Cardiac septum (tissue), 1 donor: ENCODE measurements at regions of chr17 and their contacts with region 1.

Region 1: GRCh38 chr17:78497115-78497540 is 80.1 kb downstream of the DNAH17 start:
- DNase-seq: peak; percentile 88

Region 2: DNA sequence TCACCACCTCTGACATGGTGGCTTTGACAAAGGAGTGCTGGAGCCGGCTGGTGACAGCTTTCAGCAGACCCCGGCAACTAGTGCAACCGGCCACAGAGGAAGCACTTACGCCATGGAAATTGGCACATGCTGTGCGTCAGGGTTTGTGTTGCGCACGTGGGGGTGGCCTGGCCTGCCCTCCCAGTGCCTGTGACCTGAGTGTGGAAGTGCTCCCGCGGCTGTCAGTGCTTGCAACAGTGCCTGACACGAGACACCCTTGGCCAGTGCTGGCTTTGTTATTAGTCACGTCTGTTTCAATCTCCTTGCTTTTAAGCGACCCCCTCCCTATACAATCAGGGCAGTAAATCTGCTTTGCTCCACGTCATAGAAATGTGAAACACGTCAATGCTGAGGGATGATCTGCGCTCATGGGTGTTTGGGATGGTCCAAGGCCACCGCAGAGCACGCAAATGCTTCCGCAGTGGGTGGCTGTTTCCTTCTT is 54.4 kb before region 1 on chr17:
- intact Hi-C with region 1: no loop called
- DNase-seq: peak; percentile 89

Region 3: GRCh38 chr17:78541488-78542237 is 44.5 kb after region 1 on chr17:
- intact Hi-C with region 1: no loop called
- DNase-seq: no peak

Region 4: DNA sequence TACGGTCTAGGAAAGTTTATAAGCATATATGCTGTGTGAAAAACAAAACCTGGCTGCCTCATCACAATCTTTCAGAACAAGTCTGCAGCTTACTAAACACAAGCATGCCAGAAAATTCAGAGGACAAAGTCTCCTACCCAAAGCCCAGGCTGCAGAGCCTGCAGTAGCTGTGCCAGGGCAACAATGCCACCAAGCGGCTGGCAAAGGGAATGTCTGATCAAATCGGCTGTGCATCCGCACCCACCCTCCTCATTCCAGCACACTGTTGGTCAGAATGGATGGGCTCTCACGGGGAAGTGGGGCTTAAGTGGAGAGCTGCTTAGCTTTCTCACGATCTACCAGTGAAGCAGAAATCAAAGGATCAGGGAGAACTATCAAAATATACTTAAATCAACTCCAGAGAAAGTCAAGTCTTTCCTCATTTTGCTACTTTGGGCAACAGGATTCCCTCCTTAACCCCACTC is 211.4 kb after region 1 on chr17:
- intact Hi-C with region 1: loop called (anchors 1 kb)
- DNase-seq: peak; percentile 84

Region 5: GRCh38 chr17:78745407-78746088 is 248.4 kb after region 1 on chr17:
- intact Hi-C with region 1: loop called (anchors 2 kb)
- DNase-seq: no peak

Region 6: DNA sequence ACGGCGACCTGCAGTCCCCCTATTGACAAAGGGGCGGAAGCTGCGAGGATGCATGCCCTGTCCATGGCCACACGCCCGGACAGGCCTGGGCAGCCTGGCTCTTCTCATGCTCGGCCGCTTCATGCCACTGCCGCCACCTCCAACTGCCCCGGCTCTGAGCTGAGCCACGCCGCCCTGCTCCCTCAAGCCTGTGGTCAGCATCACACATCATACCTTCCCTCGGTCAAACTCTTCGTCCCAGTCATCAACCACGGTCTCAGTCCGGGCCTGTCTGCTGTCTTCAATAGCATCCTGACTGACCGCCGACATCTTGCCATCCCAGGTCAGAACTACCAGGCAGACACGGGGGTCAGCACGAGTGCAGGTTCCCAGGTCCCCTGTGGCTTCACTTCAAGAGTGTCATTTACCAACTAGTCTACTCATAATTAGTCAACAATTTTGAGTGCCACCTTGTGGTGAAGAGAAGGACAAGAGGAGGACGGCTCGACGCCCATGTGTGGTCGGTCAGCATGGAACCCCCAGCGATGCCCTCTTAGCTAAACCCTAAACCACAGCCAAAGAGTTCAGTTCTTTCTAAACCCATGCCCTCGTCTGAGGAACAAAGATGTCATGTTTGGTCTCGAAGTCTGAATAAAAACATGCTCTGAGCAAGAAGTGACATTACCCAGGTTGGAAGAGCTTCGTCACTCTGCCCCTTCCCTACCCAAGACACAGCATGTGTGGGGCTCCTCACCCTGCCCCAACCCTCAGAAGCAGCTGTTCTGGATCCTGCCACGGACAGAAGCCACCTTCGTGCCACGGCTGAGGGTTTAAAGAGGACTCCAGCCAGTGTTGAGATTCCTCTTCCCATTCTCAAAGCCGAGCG is 301.8 kb after region 1 on chr17:
- intact Hi-C with region 1: loop called (anchors 2 kb)
- DNase-seq: no peak